ENCODE measurements at regions of chr14 and their contacts with region 1.

Region 1: GRCh38 chr14:91510174-91511042 is at the start of gene PPP4R3A:
- DNase-seq: peak; percentile 86 to 96 (median 95)
- ATAC-seq: peak; percentile 92
- H3K4me3 ChIP-seq: peak within 1 kb of the TSS; percentile 62
- H3K4me3 Mint-ChIP-seq: peak within 1 kb of the TSS; percentile 93 to 100 (median 98)
- H3K27ac ChIP-seq: peak within 1 kb of the TSS; percentile 99
- H3K27ac Mint-ChIP-seq: peak within 1 kb of the TSS; percentile 100
- H3K4me1 ChIP-seq: peaks cover 14 to 22% of the 10 kb centered on the region in 2 donors
- H3K4me1 Mint-ChIP-seq: peaks cover 15 to 38% (median 32%) of the 10 kb centered on the region in 7 donors
- H3K27me3 ChIP-seq: no peaks in the 10 kb centered on the region
- H3K27me3 Mint-ChIP-seq: no peaks in the 10 kb centered on the region
- total RNA-seq, gene PPP4R3A: 129 to 214 (median 167) TPM

Region 2: DNA sequence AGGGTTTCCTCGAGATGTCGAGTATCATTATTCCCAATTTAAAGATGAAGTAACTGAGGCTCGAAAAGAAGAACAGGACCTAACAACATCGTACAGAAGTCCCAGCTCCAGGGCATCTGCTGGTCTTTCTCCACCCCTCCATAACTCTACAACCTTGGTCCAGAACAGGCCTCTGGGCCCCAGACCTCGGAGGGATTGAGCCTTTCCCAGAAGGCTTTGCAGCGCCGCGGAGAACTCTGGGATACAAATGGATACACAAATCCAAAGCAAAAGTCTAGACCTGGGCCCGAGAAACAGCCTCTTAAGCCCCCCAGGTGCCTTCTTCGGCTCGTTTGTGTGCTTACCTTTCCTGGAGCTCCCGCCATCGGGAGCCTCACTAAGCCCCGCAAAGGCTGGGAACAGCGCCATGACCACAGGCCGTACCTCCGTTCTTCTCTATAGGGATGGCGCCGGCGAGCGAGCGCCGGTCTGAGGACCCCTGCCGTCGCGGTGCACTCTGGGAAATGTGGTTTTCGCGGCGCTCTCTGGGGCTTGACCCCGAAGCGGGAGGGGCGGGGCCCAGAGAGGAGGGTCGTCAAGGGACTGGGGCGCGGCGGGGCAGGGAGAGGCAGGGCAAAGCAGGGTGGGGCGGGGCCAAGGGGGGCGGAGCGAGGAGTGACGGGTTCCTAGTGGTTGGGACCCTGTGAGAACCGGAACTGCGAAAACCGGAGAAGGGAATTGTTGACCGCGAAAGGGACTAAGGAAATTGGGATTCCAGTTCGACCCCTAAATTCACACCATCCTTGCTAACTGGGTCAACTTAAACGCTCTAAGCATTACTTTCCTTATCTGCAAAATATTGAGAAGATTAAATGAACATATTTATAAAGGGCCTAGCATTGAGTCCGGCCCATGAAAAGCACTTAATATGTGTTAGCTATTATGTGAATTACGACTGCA is 1178.6 kb before region 1 on chr14 and contains the start of gene NRDE2:
- CTCF ChIA-PET with region 1: no interaction called
- POLR2A ChIA-PET with region 1: no interaction called
- intact Hi-C with region 1: loop called in 1 of 2 experiments (anchors 5 kb)
- DNase-seq: peak; percentile 74 to 95 (median 85)
- ATAC-seq: peak; percentile 99
- H3K4me3 ChIP-seq: peak within 1 kb of the TSS; percentile 91
- H3K4me3 Mint-ChIP-seq: peak within 1 kb of the TSS; percentile 90 to 95 (median 93)
- H3K27ac ChIP-seq: peak within 1 kb of the TSS; percentile 72
- H3K27ac Mint-ChIP-seq: peak within 1 kb of the TSS; percentile 86 to 97 (median 92)
- H3K4me1 ChIP-seq: peaks cover 0 to 9% of the 10 kb centered on the region in 2 donors
- H3K4me1 Mint-ChIP-seq: peaks cover 14 to 44% (median 38%) of the 10 kb centered on the region in 7 donors
- H3K27me3 ChIP-seq: no peaks in the 10 kb centered on the region
- H3K27me3 Mint-ChIP-seq: peaks cover 7 to 25% (median 9%) of the 10 kb centered on the region in 5 donors
- total RNA-seq, gene NRDE2: 23.6 to 30.2 (median 28.7) TPM

Region 3: DNA sequence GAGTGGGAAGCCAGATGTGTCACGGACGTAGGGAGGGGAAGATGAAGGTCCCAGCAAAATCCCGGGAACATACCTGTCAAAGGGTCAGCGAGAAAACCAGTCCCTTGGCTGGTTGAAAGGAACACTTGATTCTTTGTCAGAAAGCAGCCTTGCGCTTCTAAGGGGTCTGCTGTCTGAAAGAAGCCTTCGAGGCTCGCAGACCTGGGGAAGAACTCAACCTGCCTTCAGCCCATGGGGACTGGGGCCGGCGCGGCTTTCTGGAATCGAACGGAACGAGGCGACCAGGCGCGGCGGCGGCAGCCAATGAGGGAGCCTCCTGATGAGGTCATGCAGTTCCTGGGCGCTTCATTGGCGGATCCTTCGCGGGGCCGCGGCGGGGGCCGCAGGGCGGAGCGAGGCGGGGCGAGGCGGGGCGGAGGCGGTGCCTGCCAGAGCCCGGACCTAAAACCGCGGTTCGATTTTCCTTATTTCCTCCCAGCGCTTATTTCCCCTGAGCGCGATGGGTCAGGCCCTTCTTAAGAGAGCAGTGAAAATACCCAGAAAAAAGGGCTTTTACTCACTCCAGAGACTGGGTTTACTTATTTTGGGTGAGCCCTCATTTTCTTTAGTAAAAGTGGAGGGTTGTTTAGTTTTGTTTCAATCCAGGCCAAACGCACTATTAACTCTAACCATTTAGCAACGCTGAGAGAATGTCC is 682.3 kb before region 1 on chr14:
- CTCF ChIA-PET with region 1: no interaction called
- POLR2A ChIA-PET with region 1: no interaction called
- intact Hi-C with region 1: loop called in 1 of 2 experiments (anchors 5 kb)
- DNase-seq: peak; percentile 83 to 94 (median 85)
- ATAC-seq: peak; percentile 100
- H3K4me3 ChIP-seq: peak overlapping the region; percentile 61
- H3K4me3 Mint-ChIP-seq: peak overlapping the region; percentile 69 to 91 (median 84)
- H3K27ac ChIP-seq: peak overlapping the region; percentile 69
- H3K27ac Mint-ChIP-seq: peak overlapping the region; percentile 79 to 96 (median 86)
- H3K4me1 ChIP-seq: peaks cover 14% of the 10 kb centered on the region in 2 donors
- H3K4me1 Mint-ChIP-seq: peaks cover 7 to 28% (median 18%) of the 10 kb centered on the region in 7 donors
- H3K27me3 ChIP-seq: no peaks in the 10 kb centered on the region
- H3K27me3 Mint-ChIP-seq: peaks cover 0 to 3% (median 0%) of the 10 kb centered on the region in 5 donors

Region 4: GRCh38 chr14:91103116-91103515 is 407.3 kb before region 1 on chr14:
- CTCF ChIA-PET with region 1: no interaction called
- POLR2A ChIA-PET with region 1: no interaction called
- intact Hi-C with region 1: no loop called
- DNase-seq: no peak
- ATAC-seq: no peak
- H3K4me3 ChIP-seq: no peak overlapping the region
- H3K4me3 Mint-ChIP-seq: no peak overlapping the region
- H3K27ac ChIP-seq: no peak overlapping the region
- H3K27ac Mint-ChIP-seq: peak overlapping the region in 1 of 9 donors; percentile 41
- H3K4me1 ChIP-seq: peaks cover 0 to 2% of the 10 kb centered on the region in 2 donors
- H3K4me1 Mint-ChIP-seq: peaks cover 5 to 10% (median 8%) of the 10 kb centered on the region in 7 donors
- H3K27me3 ChIP-seq: no peaks in the 10 kb centered on the region
- H3K27me3 Mint-ChIP-seq: peaks cover 0 to 10% (median 0%) of the 10 kb centered on the region in 5 donors

Region 5: DNA sequence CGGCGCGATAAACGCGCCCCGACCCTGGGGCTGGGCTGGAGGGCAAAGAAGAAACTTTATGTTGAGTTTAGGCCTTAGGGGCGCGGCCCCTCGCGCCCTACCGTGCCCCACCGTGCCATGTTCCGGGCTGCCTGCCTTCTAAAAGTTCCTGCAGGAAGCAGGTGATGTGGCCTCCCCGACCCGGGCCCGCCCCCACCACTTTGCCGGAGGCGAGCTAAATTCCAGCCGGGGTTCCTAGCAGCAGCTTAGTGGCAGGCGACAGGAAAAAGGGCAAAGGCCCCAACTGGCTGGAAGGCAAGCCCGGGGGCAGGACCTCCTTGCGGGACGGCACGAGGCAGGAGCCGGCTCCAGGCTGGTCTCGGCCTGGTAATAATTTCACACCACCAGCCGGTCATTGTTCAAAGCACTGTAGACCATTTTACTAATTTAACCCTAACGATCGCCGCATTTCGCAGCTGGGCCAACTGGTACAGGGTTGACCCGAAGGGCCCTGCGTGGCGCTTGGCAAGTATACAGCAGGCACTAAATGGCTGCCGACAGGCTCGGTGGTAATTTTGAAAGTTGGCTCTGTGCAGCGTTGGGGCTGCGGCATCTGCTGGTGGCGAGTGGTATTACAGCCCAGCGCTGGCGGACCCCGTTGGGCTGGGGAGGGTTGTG is 91.9 kb before region 1 on chr14:
- CTCF ChIA-PET with region 1: interaction called, 11 read pairs
- POLR2A ChIA-PET with region 1: no interaction called
- intact Hi-C with region 1: loop called (anchors 1 kb)
- DNase-seq: peak; percentile 75 to 86 (median 82)
- ATAC-seq: peak; percentile 63
- H3K4me3 ChIP-seq: peak overlapping the region; percentile 52
- H3K4me3 Mint-ChIP-seq: peak overlapping the region; percentile 61 to 91 (median 84)
- H3K27ac ChIP-seq: peak overlapping the region; percentile 97
- H3K27ac Mint-ChIP-seq: peak overlapping the region; percentile 80 to 98 (median 91)
- H3K4me1 ChIP-seq: peaks cover 19 to 25% of the 10 kb centered on the region in 2 donors
- H3K4me1 Mint-ChIP-seq: peaks cover 22 to 42% (median 34%) of the 10 kb centered on the region in 7 donors
- H3K27me3 ChIP-seq: no peaks in the 10 kb centered on the region
- H3K27me3 Mint-ChIP-seq: peaks cover 0 to 7% (median 0%) of the 10 kb centered on the region in 5 donors

Region 6: DNA sequence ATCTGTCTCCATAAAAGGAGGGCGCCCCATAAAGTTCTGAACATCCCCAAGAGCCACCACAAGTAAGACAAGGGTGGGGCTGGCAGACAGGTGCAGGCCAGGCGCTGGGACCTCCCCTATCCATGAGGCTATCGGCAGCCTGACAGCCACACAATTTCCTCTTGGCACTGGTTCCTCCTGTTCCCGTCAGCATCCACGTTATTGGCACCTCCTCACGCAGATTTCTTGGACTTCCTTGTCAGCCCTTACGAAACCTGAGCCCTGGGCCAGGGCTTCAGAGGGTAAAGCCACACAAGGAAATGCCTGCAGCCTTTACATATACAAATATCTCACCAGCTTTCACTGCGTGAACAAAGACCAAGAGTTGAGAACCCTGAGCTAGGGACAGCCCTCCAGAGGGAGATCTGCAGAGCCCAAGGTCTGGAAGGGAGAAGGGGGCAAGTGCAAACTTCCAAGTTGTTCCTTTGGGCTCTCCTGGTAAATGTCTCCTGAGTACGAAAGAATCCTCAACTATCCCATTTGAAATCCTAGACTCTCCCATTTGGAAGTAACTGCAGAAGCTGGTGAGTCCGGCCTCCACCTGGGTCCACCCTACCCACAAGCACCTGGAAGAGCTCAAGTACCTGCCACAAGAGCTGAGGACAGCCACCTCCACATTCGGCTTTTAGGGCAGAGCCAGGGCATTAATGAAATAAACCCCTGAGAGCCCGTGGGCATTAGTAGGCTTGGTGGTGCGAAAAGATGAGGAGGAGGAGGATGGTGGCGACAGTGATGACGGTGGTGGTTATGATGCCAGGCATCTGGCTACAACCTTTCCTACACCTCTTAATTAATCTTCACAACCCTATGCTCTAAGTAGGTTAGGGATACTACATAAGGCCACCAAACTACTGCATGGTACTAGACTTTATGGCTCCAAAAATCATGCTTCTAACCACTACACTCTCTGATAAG is 362.4 kb after region 1 on chr14:
- CTCF ChIA-PET with region 1: no interaction called
- POLR2A ChIA-PET with region 1: interaction called, 5 read pairs
- intact Hi-C with region 1: loop called in 1 of 2 experiments (anchors 2 kb)
- DNase-seq: peak in 8 of 9 donors; percentile 32 to 84 (median 78)
- ATAC-seq: peak; percentile 59
- H3K4me3 ChIP-seq: peak overlapping the region; percentile 56
- H3K4me3 Mint-ChIP-seq: peak overlapping the region; percentile 84 to 96 (median 90)
- H3K27ac ChIP-seq: peak overlapping the region; percentile 91
- H3K27ac Mint-ChIP-seq: peak overlapping the region; percentile 95 to 100 (median 99)
- H3K4me1 ChIP-seq: peaks cover 72 to 92% of the 10 kb centered on the region in 2 donors
- H3K4me1 Mint-ChIP-seq: peaks cover 76 to 100% (median 96%) of the 10 kb centered on the region in 7 donors
- H3K27me3 ChIP-seq: no peaks in the 10 kb centered on the region
- H3K27me3 Mint-ChIP-seq: no peaks in the 10 kb centered on the region

Region 7: GRCh38 chr14:92106143-92106926 is 595.9 kb after region 1 on chr14 and contains the start of gene ATXN3:
- CTCF ChIA-PET with region 1: no interaction called
- POLR2A ChIA-PET with region 1: interaction called, 3 read pairs
- intact Hi-C with region 1: loop called (anchors 1 kb)
- DNase-seq: peak; percentile 75 to 97 (median 93)
- ATAC-seq: peak; percentile 95
- H3K4me3 ChIP-seq: peak within 1 kb of the TSS; percentile 82
- H3K4me3 Mint-ChIP-seq: peak within 1 kb of the TSS; percentile 88 to 100 (median 98)
- H3K27ac ChIP-seq: peak within 1 kb of the TSS; percentile 91
- H3K27ac Mint-ChIP-seq: peak within 1 kb of the TSS; percentile 82 to 96 (median 92)
- H3K4me1 ChIP-seq: peaks cover 5 to 17% of the 10 kb centered on the region in 2 donors
- H3K4me1 Mint-ChIP-seq: peaks cover 39 to 72% (median 61%) of the 10 kb centered on the region in 7 donors
- H3K27me3 ChIP-seq: no peaks in the 10 kb centered on the region
- H3K27me3 Mint-ChIP-seq: no peaks in the 10 kb centered on the region
- total RNA-seq, gene ATXN3: 27.8 to 54.9 (median 36.9) TPM

Region 8: GRCh38 chr14:92793709-92794546 is 1283.5 kb after region 1 on chr14 and contains the start of gene GOLGA5:
- CTCF ChIA-PET with region 1: no interaction called
- POLR2A ChIA-PET with region 1: no interaction called
- intact Hi-C with region 1: loop called in 1 of 2 experiments (anchors 1 kb)
- DNase-seq: peak; percentile 97 to 100 (median 99)
- ATAC-seq: peak; percentile 97
- H3K4me3 ChIP-seq: peak within 1 kb of the TSS; percentile 98
- H3K4me3 Mint-ChIP-seq: peak within 1 kb of the TSS; percentile 78 to 96 (median 92)
- H3K27ac ChIP-seq: peak within 1 kb of the TSS; percentile 91
- H3K27ac Mint-ChIP-seq: peak within 1 kb of the TSS; percentile 78 to 98 (median 95)
- H3K4me1 ChIP-seq: peaks cover 15 to 20% of the 10 kb centered on the region in 2 donors
- H3K4me1 Mint-ChIP-seq: peaks cover 24 to 45% (median 39%) of the 10 kb centered on the region in 7 donors
- H3K27me3 ChIP-seq: no peaks in the 10 kb centered on the region
- H3K27me3 Mint-ChIP-seq: peaks cover 0 to 9% (median 0%) of the 10 kb centered on the region in 5 donors
- total RNA-seq, gene GOLGA5: 9.7 to 25.8 (median 23.5) TPM

Measured in naive thymus-derived CD4-positive, alpha-beta T cell (primary cell).